A549 (cell line): ENCODE measurements at regions of chr17 and their contacts with region 1.

Region 1: GRCh38 chr17:78993241-78993956 is 13.7 kb upstream of the LGALS3BP start:
- DNase-seq: peak; percentile 69 to 78
- ATAC-seq: peak; percentile 64 to 87; a peak in 4 of 6 replicates
- H3K4me3 ChIP-seq: no peak overlapping the region
- H3K27ac ChIP-seq: no peak overlapping the region
- H3K4me1 ChIP-seq: no peaks in the 10 kb centered on the region; the same call in 2 of the 3 replicates
- CTCF ChIP-seq: peak; percentile 89
- EP300 ChIP-seq: no peak
- POLR2A ChIP-seq: no peak
- RAD21 ChIP-seq: peak; percentile 49 to 54

Region 2: DNA sequence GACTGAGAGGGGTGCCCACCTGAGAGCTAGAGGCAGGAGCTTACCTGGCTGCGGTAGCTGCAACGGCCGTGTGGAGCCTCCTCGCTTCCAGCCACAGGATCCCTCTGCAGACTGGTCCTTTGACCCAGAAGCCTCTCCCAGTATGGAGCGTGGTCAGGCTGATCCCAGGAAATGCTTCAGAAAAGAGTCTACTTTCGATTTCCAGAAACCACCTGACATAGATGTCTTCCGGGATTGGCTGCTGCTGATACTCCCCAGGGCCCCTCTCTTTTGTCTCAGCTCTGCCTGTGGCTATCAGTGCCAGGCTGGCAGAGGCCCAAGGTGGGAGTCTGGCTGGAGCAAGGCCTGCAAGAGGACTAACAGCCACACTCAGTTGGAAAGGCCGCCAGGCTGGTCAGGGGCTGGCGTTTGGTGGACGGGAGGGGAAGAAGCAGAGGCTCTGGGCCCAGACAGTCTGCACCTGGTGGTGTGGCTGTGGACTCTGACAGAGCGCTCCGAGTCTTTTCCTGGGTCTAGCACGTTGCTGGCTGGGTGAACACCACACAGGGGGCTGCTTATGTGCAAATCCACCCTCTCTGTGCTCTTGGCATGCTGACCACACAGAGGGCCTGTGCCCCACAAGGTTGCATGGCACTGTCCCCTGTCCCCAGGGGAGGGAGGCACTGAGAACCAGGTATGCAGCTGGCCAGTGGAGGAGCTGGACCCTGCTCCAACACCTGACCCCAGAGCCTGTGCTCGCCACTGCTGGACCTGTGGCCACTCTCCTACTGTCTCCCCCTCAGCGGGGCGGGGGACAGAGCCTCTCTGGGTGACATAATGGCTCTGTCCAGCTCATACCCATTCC is 13.4 kb before region 1 on chr17 and contains the start of gene LGALS3BP:
- CTCF ChIA-PET with region 1: interaction called, 63 read pairs
- POLR2A ChIA-PET with region 1: no interaction called
- DNase-seq: peak; percentile 45 to 85
- ATAC-seq: peak; percentile 44 to 73
- H3K4me3 ChIP-seq: peak within 1 kb of the TSS; percentile 25
- H3K27ac ChIP-seq: peak within 1 kb of the TSS; percentile 59 to 82
- H3K4me1 ChIP-seq: peaks cover 15% of the 10 kb centered on the region; the same call in 2 of the 3 replicates
- CTCF ChIP-seq: no peak
- EP300 ChIP-seq: no peak
- POLR2A ChIP-seq: no peak
- RAD21 ChIP-seq: no peak
- polyA plus RNA-seq, gene LGALS3BP: 28.3 and 32.3 TPM in 2 replicates

Region 3: GRCh38 chr17:79009397-79010308 is 16.3 kb after region 1 on chr17 and contains the start of gene CANT1:
- CTCF ChIA-PET with region 1: interaction called, 35 read pairs
- POLR2A ChIA-PET with region 1: no interaction called
- DNase-seq: peak; percentile 87 to 95
- ATAC-seq: peak; percentile 86 to 97
- H3K4me3 ChIP-seq: peak within 1 kb of the TSS; percentile 98
- H3K27ac ChIP-seq: peak within 1 kb of the TSS; percentile 98 to 99
- H3K4me1 ChIP-seq: peaks cover 31% of the 10 kb centered on the region
- CTCF ChIP-seq: no peak
- EP300 ChIP-seq: no peak
- POLR2A ChIP-seq: peak; percentile 65
- RAD21 ChIP-seq: no peak
- polyA plus RNA-seq, gene CANT1: 65.5 and 70.0 TPM in 2 replicates

Region 4: DNA sequence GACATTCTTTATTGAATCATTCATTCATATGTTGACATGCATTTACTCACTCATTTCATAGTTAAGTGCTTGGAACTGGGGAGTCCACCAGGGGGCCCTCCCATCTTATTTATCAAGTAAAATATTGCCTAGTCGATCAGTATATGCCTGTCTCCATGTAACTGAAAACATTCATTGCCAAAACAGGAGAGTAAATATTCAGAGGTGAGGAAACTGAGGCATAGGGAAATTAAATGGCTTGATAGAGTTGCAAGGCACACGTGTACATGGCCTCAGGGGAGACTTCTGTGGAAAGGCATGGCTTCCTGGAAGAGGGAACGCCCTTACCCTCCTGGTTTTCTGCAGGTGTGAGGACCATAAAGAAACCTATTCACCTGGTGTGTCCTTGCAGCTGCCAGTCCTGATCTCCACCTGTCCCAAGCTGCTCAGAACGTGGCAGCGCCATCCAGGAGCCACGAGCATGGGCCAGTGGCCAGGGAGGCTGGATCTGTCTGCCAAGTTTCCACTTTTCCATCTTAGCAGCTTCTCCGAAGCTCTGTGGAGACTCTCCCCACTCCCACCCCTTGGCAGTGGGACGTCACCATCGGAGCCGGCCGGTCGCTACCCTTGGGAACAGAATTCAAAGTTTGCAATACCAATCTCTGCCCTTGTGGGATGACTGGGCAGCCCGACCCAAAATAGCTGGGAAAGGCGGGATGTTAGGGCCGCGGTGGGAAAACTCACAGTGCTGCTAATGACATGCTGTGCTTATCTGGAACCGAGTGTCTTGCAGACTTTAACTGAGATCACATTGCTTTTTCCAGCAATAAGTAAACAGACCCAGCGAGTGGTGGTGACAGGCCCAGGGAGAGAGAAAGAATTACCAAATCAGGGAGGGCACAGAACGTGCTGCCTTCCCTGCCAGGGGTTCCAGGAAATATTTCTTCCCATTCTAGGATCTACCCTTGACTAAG is 26.5 kb after region 1 on chr17:
- CTCF ChIA-PET with region 1: interaction called, 17 read pairs
- POLR2A ChIA-PET with region 1: no interaction called
- DNase-seq: peak; percentile 71 to 82
- ATAC-seq: peak; percentile 48 to 62; a peak in 3 of 6 replicates
- H3K4me3 ChIP-seq: no peak overlapping the region
- H3K27ac ChIP-seq: peak overlapping the region; percentile 32 to 43; a peak in 4 of 6 replicates
- H3K4me1 ChIP-seq: peaks cover 15% of the 10 kb centered on the region
- CTCF ChIP-seq: peak; percentile 98
- EP300 ChIP-seq: no peak; a peak in 1 of 5 replicates
- POLR2A ChIP-seq: no peak
- RAD21 ChIP-seq: peak; percentile 91 to 96